Activated T-helper 1 cell treated with anti-CD3 and anti-CD28 coated beads, Interleukin-12 subunit alpha, Interleukin-12 subunit beta, Interleukin-2, Interleukin-4 antibody, amounts not matched to agents 30 ng/mL and 10 ng/mL and 1 ng/mL, durations not matched to agents 14 hours and 24 hours and 36 hours (primary cell): ENCODE measurements at regions of chr6 and their contacts with region 1.

Region 1: DNA sequence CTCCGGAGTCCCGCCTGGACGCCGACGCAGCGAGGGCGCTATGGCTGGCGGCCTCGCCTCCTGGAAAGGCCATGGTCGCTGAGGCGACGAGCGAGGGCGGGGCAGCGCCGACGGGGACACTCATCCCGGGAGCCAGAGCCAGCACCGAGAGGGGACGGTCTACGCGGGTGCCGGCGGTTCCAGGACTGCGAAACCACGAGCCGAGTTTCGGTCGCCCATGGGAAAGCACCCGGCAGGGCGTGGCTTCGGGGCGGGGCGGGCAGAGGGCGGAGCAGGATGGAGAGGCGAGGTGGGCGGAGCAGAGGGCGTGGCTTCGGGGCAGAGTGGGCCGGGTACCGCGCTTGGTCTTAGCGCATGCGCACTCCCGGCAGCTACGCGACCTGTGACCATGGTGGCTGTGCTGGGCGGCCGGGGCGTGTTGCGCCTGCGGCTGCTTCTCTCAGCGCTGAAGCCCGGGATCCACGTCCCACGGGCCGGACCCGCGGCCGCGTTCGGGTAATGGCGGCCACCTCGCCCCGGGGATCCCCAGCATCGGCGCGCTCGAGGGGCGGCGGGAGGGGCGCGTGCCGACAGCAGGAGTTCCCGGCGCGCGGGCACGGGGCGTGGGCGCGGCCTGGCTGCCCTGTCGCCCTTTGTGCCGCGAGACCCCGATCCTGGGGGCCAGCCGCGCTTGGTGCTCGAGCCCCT is at the start of gene BPHL:
- DNase-seq: peak; percentile 99
- H3K4me3 Mint-ChIP-seq: peak within 1 kb of the TSS; percentile 82
- H3K27ac Mint-ChIP-seq: peak within 1 kb of the TSS; percentile 78
- H3K4me1 Mint-ChIP-seq: peaks cover 23% of the 10 kb centered on the region
- H3K27me3 Mint-ChIP-seq: no peaks in the 10 kb centered on the region
- total RNA-seq, gene BPHL: 6.6 and 7.9 TPM in 2 replicates

Region 2: GRCh38 chr6:2841264-2842138 is 277.0 kb before region 1 on chr6 and contains the start of gene SERPINB1:
- intact Hi-C with region 1: loop called (anchors 2 kb)
- DNase-seq: peak; percentile 80
- H3K4me3 Mint-ChIP-seq: peak within 1 kb of the TSS; percentile 96
- H3K27ac Mint-ChIP-seq: peak within 1 kb of the TSS; percentile 93
- H3K4me1 Mint-ChIP-seq: peaks cover 62% of the 10 kb centered on the region
- H3K27me3 Mint-ChIP-seq: no peaks in the 10 kb centered on the region
- total RNA-seq, gene SERPINB1: 79.5 and 80.1 TPM in 2 replicates

Region 3: DNA sequence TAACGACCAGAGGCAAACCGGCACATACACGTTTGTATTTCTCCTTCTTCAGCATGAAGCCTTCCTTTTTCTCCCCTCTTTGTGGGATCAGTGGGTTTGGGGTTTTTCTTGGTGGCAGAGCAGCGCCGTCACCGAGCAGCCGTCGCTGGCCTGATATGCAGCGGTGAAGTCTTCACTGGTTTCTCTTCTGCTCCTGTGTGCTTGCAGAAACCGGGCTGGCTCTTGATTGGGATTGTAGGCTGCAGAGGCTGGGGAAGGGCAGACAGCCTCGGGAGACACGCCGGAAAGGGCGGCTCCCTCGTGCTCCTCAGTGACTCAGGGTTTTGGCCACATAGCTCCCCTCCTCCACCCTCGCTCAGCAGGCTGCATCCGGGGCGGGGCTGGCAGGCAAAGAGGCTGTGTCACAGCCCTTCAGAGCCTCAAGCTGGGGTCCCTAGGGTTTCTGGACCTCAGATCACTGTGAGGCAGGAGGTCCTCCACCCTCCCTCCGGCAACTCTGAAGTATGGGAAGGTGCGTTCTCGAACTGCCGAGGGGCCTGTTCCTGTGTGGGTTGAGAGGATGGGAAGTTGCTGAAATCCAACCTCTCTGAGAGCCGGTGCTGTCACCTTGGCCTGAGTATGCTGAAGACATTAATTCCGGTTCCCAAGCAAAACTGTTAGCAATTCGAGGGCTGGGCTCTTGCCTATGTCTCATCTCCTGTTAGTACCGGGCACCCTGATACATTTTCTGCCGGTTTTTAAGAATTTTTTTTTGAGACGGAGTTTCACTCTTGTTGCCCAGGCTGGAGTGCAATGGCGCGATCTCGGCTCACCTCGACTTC is 94.6 kb before region 1 on chr6:
- intact Hi-C with region 1: loop called (anchors 1 kb)
- DNase-seq: peak; percentile 87
- H3K4me3 Mint-ChIP-seq: peak overlapping the region; percentile 87
- H3K27ac Mint-ChIP-seq: peak overlapping the region; percentile 91
- H3K4me1 Mint-ChIP-seq: peaks cover 51% of the 10 kb centered on the region
- H3K27me3 Mint-ChIP-seq: no peaks in the 10 kb centered on the region

Region 4: DNA sequence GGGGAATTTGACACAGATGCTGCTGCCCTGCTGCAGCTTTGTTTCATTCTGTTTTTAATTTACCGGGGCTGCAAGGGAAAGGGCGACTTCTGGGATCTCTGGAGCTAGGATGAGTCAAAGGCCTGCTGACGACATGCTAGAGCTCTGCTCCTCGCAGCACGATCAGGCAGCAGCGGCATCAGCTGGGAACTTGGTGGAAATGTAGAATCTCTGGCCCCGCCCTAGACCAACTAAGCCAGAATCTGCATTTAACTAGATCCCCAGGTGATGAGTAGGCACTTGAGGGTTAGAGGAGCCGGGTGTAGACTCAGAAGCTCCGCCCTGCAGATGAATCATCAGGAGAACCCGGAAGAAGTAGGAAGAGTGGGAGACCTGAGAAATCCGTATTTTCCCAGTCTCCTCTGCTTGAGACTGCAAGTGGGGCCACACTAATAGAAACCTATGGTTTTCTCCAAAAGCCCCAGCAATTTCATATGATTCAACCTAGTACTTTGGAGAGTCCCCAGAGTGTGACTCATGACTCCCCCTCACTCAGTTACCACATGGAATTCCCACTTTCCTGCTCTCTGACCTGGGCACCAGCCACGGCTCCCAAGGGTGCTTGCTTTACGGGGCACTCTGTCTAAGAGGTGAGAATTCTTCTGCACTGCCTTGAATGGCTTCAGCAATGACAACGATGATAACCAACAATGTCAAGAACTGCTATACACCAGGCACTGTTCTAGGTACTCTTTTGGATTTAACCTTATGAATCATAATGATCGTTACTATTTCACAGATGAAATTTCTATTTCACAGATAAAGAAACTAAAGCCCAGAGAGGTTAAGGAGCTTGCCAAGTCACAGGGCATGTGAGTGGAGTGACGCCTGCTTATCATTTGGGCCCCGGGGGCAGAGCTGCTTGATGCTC is 90.9 kb after region 1 on chr6:
- intact Hi-C with region 1: loop called (anchors 1 kb)
- DNase-seq: no peak
- H3K4me3 Mint-ChIP-seq: peak overlapping the region; percentile 43
- H3K27ac Mint-ChIP-seq: peak overlapping the region; percentile 89
- H3K4me1 Mint-ChIP-seq: peaks cover 41% of the 10 kb centered on the region
- H3K27me3 Mint-ChIP-seq: peaks cover 23% of the 10 kb centered on the region

Region 5: DNA sequence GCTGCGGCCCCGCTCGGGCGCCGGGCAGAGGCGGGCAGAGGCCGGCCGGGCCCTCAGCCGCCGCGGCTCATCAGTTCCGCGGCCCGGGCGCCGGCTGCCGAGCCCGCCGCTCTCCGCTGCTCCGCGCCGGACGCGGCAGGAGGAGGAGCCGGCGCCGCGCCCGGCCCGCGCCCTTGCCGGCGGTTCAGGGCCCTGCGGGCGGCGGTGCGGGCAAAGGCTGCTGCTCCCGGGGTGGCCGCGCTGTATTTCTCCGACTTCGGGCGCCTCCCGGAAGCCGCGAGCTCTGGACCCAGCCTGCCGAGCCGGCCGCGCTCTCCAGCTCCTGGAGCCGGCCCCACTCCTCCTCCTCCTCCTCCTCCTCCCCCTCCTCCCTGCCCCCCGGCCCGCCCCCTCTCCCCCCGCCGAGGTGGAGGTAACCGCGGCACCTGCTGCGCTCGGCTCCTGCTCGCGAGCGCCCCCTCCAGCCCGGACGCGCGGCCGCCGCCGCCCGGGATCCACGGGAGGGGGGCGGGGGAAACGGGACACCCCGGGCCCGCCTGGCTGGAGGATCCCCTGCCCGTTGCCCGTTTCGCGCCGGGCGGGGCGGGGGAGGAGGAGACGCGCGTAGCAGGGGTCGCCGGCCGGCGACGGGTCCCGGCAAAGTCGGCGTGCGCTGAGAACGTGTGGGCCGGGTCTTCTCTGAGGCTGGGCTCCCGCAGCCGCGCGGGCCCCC is 338.4 kb after region 1 on chr6 and contains the start of gene SLC22A23:
- intact Hi-C with region 1: loop called (anchors 5 kb)
- DNase-seq: peak; percentile 42
- H3K4me3 Mint-ChIP-seq: peak within 1 kb of the TSS; percentile 81
- H3K27ac Mint-ChIP-seq: peak within 1 kb of the TSS; percentile 70
- H3K4me1 Mint-ChIP-seq: peaks cover 7% of the 10 kb centered on the region
- H3K27me3 Mint-ChIP-seq: peaks cover 46% of the 10 kb centered on the region
- total RNA-seq, gene SLC22A23: 0.05 and 0.39 TPM in 2 replicates